ENCODE measurements at regions of chr19 and their contacts with region 1.

Region 1: GRCh38 chr19:46728693-46729676 is 12.1 kb upstream of the PRKD2 start:
- DNase-seq: peak; percentile 75 to 89 (median 81)
- ATAC-seq: peak; percentile 65 to 83 (median 68)
- H3K4me3 ChIP-seq: peak overlapping the region in 2 of 12 donors; percentile 24 to 28
- H3K27ac ChIP-seq: peak overlapping the region; percentile 39 to 87 (median 71)
- H3K4me1 ChIP-seq: peaks cover 0 to 66% (median 21%) of the 10 kb centered on the region in 12 donors
- H3K27me3 ChIP-seq: no peaks in the 10 kb centered on the region
- CTCF ChIP-seq: peak; percentile 89 to 99 (median 94)
- POLR2A ChIP-seq: no peak

Region 2: DNA sequence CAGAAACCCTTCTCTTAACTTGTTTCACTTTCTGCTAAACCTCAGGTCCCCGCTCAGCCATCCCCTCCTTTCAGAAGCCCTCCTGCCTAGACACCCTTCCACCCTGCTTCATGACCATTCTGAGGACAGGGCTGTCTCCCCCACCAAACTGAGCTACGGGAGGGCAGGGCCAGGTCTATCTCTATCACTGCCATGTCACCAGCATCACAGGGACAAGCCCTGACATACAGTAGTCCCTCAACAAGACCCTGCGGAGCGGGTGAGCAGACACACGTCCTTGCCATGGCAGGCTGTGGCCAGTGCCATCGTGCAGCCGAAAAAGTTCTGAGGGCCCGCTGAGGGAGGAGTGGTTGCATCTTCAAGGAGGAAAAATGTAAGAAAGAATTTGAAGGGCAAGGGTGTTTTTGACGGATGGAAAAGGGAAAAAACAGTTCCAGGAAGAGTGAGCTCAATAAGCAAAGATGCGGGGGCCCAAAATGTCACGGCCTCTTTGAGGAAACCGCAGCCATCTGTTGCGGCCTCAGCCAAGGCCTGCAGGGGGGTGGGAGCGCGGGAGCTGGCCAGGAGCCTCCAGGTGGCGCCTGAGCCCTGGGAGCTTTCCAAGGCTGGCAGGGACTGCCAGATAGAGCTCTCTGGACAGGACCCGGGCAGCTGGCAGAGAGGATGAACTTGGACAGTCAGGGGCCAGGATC is 112.2 kb before region 1 on chr19:
- intact Hi-C with region 1: no loop called
- DNase-seq: peak in 4 of 5 donors; percentile 64 to 80 (median 71)
- ATAC-seq: peak; percentile 40 to 73 (median 57)
- H3K4me3 ChIP-seq: no peak overlapping the region
- H3K27ac ChIP-seq: peak overlapping the region in 5 of 12 donors; percentile 8 to 50 (median 27)
- H3K4me1 ChIP-seq: peaks cover 0 to 61% (median 46%) of the 10 kb centered on the region in 12 donors
- H3K27me3 ChIP-seq: no peaks in the 10 kb centered on the region
- CTCF ChIP-seq: peak; percentile 19 to 54 (median 38)
- POLR2A ChIP-seq: no peak

Region 3: DNA sequence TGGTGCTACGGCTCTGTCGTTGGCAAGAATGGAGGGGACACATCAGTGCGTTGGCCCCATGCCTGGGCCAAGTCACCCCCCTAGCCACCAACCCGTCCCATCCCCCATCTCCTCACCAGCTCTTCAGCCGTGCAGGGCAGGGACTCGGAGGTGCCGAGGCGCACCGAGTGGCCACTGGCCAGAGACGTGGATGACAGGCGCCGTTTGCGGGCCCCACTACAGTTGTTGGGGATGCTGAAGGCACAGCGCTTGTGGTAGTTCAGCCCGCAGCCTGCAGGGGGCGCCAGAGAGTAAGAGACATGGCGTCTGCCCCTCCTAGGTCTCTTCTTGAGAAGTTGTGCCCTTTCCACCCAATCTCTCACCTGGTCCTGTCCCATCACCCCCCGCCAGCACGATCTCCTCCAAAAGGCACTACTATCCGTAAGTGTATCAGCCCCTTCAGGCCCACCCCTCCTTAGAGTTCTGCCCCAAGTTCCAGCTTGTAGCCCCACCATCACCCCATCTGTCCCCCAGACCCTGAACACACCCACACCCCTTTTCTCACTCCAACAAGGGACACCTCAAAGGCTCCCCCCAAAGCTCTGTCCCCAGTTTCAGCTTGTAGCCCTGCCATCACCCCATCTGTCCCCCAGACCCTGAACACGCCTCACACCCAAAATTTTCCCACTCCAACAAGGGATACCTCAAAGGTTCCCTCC is 24.5 kb before region 1 on chr19:
- intact Hi-C with region 1: loop called in 5 of 10 experiments (anchors 1 to 2 kb)
- DNase-seq: peak; percentile 65 to 91 (median 68)
- ATAC-seq: peak; percentile 49 to 80 (median 78)
- H3K4me3 ChIP-seq: no peak overlapping the region
- H3K27ac ChIP-seq: no peak overlapping the region
- H3K4me1 ChIP-seq: peaks cover 0 to 4% (median 0%) of the 10 kb centered on the region in 12 donors
- H3K27me3 ChIP-seq: no peaks in the 10 kb centered on the region
- CTCF ChIP-seq: peak; percentile 91 to 99 (median 95)
- POLR2A ChIP-seq: no peak

Region 4: GRCh38 chr19:46713781-46714443 is 15.1 kb before region 1 on chr19:
- intact Hi-C with region 1: loop called in 2 of 10 experiments (anchors 1 to 2 kb)
- DNase-seq: peak; percentile 93 to 96 (median 94)
- ATAC-seq: peak; percentile 63 to 79 (median 72)
- H3K4me3 ChIP-seq: peak overlapping the region; percentile 32 to 89 (median 77)
- H3K27ac ChIP-seq: peak overlapping the region; percentile 66 to 96 (median 90)
- H3K4me1 ChIP-seq: peaks cover 0 to 53% (median 27%) of the 10 kb centered on the region in 12 donors
- H3K27me3 ChIP-seq: no peaks in the 10 kb centered on the region
- CTCF ChIP-seq: no peak
- POLR2A ChIP-seq: no peak

Region 5: DNA sequence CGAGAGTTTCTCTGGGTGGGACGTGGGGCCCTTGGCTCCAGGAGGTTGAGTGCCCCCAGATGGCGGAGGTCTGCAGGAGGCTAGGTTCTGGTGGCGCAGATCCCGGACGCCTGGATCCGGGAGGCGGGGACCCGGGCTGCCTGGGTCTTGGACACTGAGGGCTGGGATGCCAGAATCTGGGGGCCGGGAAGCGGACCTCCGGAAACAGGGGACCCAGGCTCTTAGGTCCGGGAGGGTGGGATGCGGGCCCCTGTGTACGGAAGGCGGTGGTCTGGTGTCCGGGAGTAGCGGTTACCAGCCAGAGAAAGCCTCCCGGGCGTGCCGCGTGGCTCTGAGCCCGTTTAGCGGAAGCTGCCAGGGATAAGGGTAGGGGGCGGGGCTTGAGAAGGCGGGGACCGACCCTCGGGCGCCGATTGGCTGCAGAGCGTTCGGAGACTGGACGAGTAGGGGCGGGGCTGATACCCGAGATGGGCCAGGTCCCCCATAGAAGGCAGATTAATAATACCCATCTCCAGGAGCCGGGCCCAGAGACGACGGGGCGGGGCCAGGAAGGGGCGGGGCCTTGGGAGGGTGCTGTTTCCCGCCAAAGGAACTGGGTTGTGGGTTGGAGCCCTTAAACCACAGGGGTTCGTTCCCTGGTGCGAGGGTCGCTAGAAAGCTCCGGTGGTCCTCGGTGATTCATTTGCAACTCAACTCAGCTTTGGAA is 59.4 kb after region 1 on chr19 and contains the start of gene SLC1A5:
- intact Hi-C with region 1: no loop called
- DNase-seq: peak; percentile 95 to 98 (median 96)
- ATAC-seq: peak; percentile 86 to 95 (median 94)
- H3K4me3 ChIP-seq: peak within 1 kb of the TSS; percentile 24 to 80 (median 64)
- H3K27ac ChIP-seq: peak within 1 kb of the TSS; percentile 49 to 95 (median 82)
- H3K4me1 ChIP-seq: peaks cover 0 to 49% (median 26%) of the 10 kb centered on the region in 12 donors
- H3K27me3 ChIP-seq: peaks cover 0 to 11% (median 0%) of the 10 kb centered on the region in 9 donors
- CTCF ChIP-seq: peak in 1 of 12 donors; percentile 5
- POLR2A ChIP-seq: peak; percentile 3 to 93
- total RNA-seq, gene SLC1A5: 3.7 to 22.4 (median 8.9) TPM